ENCODE measurements at regions of chrX and their contacts with region 1.

Region 1: DNA sequence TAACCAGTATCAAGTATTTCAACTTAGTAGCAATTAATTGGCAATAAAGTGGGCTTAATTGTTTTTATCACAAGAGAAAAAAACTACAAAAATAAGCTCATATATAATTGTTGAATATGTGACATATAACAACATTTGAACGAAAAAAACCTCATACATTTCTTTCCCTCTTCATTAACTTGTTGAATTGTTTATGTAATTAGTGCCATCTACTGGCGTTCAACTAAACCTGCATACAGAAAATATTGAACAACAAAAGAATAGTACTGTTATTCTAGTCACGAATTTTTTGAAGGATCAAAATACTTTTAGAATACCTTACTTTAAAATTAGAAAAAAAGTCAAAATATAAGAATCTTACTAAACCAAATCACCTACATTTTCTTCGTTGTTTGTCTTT is 586.5 kb upstream of the FTHL17 start:
- DNase-seq: no peak
- H3K4me3 Mint-ChIP-seq: no peak overlapping the region
- H3K27ac Mint-ChIP-seq: no peak overlapping the region
- H3K4me1 Mint-ChIP-seq: no peaks in the 10 kb centered on the region
- H3K27me3 Mint-ChIP-seq: no peaks in the 10 kb centered on the region

Region 2: GRCh38 chrX:30735839-30736238 is 922.5 kb before region 1 on chrX:
- intact Hi-C with region 1: loop called (anchors 2 kb)
- DNase-seq: peak; percentile 64
- H3K4me3 Mint-ChIP-seq: no peak overlapping the region
- H3K27ac Mint-ChIP-seq: no peak overlapping the region
- H3K4me1 Mint-ChIP-seq: peaks cover 11% of the 10 kb centered on the region
- H3K27me3 Mint-ChIP-seq: no peaks in the 10 kb centered on the region

Region 3: GRCh38 chrX:31213941-31214340 is 444.4 kb before region 1 on chrX:
- intact Hi-C with region 1: loop called (anchors 2 kb)
- DNase-seq: no peak
- H3K4me3 Mint-ChIP-seq: no peak overlapping the region
- H3K27ac Mint-ChIP-seq: no peak overlapping the region
- H3K4me1 Mint-ChIP-seq: peaks cover 16% of the 10 kb centered on the region
- H3K27me3 Mint-ChIP-seq: no peaks in the 10 kb centered on the region

Measured in activated T-helper 1 cell treated with anti-CD3 and anti-CD28 coated beads, Interleukin-12 subunit alpha, Interleukin-12 subunit beta, Interleukin-2, Interleukin-4 antibody, amounts not matched to agents 30 ng/mL and 10 ng/mL and 1 ng/mL, durations not matched to agents 14 hours and 24 hours and 36 hours (primary cell).